ENCODE measurements at regions of chr7 and their contacts with region 1.

Region 1: DNA sequence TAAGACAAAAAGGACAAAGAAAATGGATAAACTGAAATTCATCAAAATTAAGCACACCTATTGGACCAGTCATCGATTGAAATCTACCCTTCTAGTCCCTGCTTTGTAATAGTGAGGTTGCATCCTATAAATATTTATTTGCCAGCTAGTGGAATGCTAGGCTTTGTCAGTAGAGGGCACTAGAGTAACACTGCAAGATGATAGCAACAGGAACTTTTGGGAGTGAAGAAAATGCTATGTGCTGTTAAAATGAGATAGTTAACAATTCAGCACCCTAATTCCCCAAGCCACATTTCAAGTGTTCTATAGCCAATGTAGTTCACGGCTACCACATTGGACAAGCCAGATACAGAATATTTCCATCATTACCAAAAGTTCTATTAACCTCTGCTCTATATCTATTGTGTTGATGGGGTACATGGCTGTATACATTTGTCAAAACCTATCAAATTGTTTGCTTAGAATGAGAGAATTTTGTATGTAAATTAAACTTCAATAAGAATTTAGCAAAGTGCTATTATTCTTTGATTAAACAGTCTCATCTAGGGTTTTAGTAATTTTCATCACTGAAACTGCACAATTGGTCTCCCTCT is 69.8 kb downstream of the LSMEM1 start:
- DNase-seq: peak in 1 of 2 experiments; percentile 67
- H3K4me3 ChIP-seq: no peak overlapping the region
- H3K4me3 Mint-ChIP-seq: no peak overlapping the region
- H3K27ac Mint-ChIP-seq: no peak overlapping the region
- H3K4me1 ChIP-seq: no peaks in the 10 kb centered on the region
- H3K4me1 Mint-ChIP-seq: no peaks in the 10 kb centered on the region
- H3K27me3 ChIP-seq: no peaks in the 10 kb centered on the region
- H3K27me3 Mint-ChIP-seq: no peaks in the 10 kb centered on the region
- CTCF ChIP-seq: peak; percentile 82 to 89

Region 2: DNA sequence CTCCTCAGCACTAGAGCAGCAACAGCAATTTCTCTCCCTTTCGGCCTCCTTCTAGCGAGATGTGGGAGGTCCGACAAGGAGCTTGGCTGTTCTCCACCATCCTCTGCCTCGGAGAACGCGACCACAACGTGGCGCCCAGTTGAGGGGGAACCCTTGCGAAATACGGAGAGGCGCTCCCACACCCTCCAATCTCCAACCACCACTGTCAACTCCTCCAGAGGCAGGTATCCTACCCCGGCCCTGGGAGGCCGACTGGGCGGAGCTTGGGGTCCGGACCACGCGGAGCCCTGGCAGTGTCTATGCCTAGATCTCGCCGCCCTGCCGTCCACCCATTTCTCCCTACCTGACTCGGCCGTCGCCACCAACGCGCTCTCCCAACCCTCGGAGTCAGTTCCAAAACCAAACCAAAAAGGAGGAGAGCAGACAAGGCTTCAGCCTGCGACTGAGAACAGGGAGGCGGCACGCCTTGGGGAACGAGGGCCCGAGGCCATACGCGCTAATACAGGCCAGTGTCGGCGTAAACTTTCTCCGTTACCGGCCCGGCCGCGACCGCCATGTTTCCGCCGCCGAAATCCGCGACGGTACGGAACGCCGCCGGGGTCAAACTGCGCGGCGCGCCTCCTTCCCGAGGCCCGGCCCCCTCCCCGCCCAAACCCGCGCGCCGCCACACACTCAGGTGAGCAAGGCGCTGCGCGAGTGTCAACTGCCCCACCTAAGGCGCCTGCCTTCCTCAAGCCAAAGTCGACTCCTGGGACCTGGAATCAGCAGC is 239.4 kb after region 1 on chr7 and contains the start of gene TMEM168:
- CTCF ChIA-PET with region 1: no interaction called
- POLR2A ChIA-PET with region 1: no interaction called
- intact Hi-C with region 1: loop called (anchors 5 kb)
- DNase-seq: peak; percentile 88 to 89
- H3K4me3 ChIP-seq: peak within 1 kb of the TSS; percentile 88
- H3K4me3 Mint-ChIP-seq: peak within 1 kb of the TSS; percentile 93
- H3K27ac Mint-ChIP-seq: peak within 1 kb of the TSS; percentile 87
- H3K4me1 ChIP-seq: peaks cover 11% of the 10 kb centered on the region
- H3K4me1 Mint-ChIP-seq: peaks cover 22% of the 10 kb centered on the region
- H3K27me3 ChIP-seq: no peaks in the 10 kb centered on the region
- H3K27me3 Mint-ChIP-seq: no peaks in the 10 kb centered on the region
- CTCF ChIP-seq: no peak
- total RNA-seq, gene TMEM168: 21.9 and 28.9 TPM in 2 replicates

Region 3: GRCh38 chr7:112898432-112899290 is 348.1 kb after region 1 on chr7:
- CTCF ChIA-PET with region 1: no interaction called
- POLR2A ChIA-PET with region 1: no interaction called
- intact Hi-C with region 1: loop called (anchors 1 kb)
- DNase-seq: peak; percentile 72 to 80
- H3K4me3 ChIP-seq: no peak overlapping the region
- H3K4me3 Mint-ChIP-seq: no peak overlapping the region
- H3K27ac Mint-ChIP-seq: no peak overlapping the region
- H3K4me1 ChIP-seq: peaks cover 4% of the 10 kb centered on the region; the same call in 1 of the 2 replicates
- H3K4me1 Mint-ChIP-seq: no peaks in the 10 kb centered on the region
- H3K27me3 ChIP-seq: no peaks in the 10 kb centered on the region
- H3K27me3 Mint-ChIP-seq: no peaks in the 10 kb centered on the region
- CTCF ChIP-seq: peak; percentile 70 to 76

Region 4: DNA sequence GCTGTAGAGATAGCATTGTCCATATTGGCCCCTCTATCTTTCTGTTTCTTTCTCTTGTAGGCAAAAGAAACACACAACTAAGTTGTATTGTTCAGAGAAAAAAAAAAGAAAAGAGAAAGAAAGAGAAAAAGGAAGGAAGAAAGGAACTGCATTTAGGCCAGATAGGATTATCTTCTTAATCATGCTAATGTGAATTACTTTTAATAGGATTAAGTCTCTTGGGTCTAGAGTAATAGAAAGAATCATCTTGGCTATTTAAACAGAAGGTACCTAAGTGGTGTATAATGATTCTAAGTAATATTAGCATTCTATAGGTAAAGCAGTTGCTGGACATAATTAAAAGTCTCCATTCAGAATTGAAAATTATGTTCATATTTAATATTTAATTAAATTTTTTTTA is 493.8 kb after region 1 on chr7:
- CTCF ChIA-PET with region 1: no interaction called
- POLR2A ChIA-PET with region 1: no interaction called
- intact Hi-C with region 1: no loop called
- DNase-seq: no peak
- H3K4me3 ChIP-seq: no peak overlapping the region
- H3K4me3 Mint-ChIP-seq: no peak overlapping the region
- H3K27ac Mint-ChIP-seq: no peak overlapping the region
- H3K4me1 ChIP-seq: no peaks in the 10 kb centered on the region
- H3K4me1 Mint-ChIP-seq: no peaks in the 10 kb centered on the region
- H3K27me3 ChIP-seq: no peaks in the 10 kb centered on the region
- H3K27me3 Mint-ChIP-seq: peaks cover 13% of the 10 kb centered on the region
- CTCF ChIP-seq: no peak

Region 5: DNA sequence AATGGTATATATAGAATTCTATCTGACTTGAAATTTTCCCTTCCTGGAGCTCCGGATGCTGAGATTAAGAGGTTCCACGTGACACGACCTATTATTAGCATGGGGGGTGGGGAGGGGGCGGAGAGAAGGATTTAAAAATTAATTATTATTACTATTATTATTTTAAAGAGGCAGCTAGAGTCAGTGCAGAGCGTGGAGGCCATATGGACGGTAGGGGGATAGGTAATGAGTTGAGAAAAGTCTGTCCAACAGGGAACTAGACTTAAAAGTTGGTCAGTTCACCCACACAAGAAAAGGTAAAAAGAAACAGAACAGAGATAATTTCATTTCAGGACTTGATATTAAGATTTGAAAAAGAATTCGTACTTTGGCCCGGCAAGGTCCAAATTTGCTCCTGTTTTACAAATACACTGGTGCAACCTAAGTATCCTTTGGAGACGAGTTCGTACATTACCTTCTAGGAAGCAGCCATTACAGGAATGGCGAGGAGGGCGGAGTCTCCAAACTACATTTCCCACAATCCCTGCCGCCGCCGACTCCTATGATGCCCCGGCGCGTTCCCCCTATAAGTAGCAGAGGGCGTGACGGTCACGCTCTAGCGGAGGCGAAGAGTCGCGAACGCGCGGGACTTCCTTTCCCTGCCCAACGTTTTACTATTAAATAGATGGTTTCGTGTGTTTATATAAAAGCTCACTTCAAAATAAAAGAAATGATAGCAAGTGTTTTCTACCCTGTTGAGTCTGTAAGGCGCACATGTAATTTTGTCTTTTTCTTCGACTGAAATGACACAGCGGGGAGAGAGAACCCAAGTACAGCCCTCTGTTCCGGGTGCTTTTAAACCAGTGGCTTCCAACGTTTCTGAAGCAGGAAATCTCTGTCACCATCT is 567.8 kb after region 1 on chr7 and contains the start of gene SMIM30:
- CTCF ChIA-PET with region 1: no interaction called
- POLR2A ChIA-PET with region 1: no interaction called
- intact Hi-C with region 1: loop called (anchors 5 kb)
- DNase-seq: peak; percentile 88
- H3K4me3 ChIP-seq: peak within 1 kb of the TSS; percentile 49
- H3K4me3 Mint-ChIP-seq: peak within 1 kb of the TSS; percentile 97
- H3K27ac Mint-ChIP-seq: peak within 1 kb of the TSS; percentile 93
- H3K4me1 ChIP-seq: peaks cover 6% of the 10 kb centered on the region
- H3K4me1 Mint-ChIP-seq: no peaks in the 10 kb centered on the region
- H3K27me3 ChIP-seq: no peaks in the 10 kb centered on the region
- H3K27me3 Mint-ChIP-seq: no peaks in the 10 kb centered on the region
- CTCF ChIP-seq: peak in 1 of 2 experiments; percentile 4
- total RNA-seq, gene SMIM30: 29.8 and 29.9 TPM in 2 replicates

Measured in Caco-2 (cell line).